Activated naive CD4-positive, alpha-beta T cell treated with anti-CD3 and anti-CD28 coated beads for 36 hours (primary cell): ENCODE measurements at regions of chr3 and their contacts with region 1.

Region 1: DNA sequence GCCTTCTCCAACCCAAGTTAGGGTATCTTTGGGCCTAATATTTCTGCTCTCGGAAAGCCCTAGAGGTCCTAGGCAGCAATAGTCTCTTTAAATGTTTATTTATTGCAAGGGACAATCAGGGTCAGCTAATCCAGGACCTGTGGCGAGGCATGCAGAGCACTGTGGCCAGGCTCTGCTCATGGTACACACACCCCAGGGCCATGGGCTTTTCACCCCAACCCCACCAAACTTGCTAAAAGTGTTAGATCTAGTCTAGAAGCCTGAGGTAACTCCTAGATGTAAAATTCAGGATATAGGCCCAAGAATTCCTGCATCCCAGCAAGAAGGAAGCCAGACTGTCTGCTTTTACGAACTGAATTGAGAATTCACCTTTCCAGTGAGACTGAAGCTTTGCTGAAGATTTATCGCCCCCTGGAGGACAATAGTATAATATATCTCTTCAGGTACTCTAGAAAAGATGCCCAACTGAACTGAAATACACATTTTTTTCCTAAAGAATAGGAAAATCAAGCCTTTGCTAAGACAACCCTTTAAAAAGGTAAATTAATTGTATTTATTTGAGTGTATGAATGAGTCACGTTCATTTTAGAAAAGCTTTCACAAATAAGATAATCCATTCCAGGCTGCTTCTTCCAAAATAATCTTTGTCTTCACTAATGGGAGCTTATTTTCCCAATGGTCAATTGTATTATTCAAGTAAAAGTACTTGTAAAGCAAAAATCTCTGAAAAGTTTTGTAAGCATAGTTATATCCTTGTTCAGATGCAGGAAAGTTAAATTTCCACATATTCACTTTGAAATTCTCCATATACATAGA is 89.8 kb downstream of the LRRC3B start:
- DNase-seq: no peak
- H3K4me3 Mint-ChIP-seq: no peak overlapping the region
- H3K27ac Mint-ChIP-seq: no peak overlapping the region
- H3K4me1 Mint-ChIP-seq: no peaks in the 10 kb centered on the region
- H3K27me3 Mint-ChIP-seq: peaks cover 2% of the 10 kb centered on the region

Region 2: DNA sequence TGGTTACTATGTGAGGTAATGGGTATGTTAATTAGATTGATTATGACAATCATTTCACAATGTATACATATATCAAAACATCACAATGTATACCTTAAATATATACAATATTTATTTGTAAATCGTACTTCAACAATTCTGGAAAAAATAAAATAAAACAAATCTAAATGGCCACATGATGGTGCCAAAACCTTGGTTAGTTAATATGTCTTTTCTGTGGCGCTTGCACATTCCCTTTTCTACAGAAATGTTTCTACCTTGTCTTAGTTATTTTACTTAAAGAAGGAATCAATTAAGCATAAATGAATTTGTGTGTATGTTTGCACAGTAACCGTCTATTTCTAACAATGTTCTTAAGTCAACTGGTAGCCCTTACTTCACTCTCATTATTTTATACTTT is 869.1 kb before region 1 on chr3:
- CTCF ChIA-PET with region 1: no interaction called
- intact Hi-C with region 1: loop called (anchors 5 kb)
- DNase-seq: no peak
- H3K4me3 Mint-ChIP-seq: no peak overlapping the region
- H3K27ac Mint-ChIP-seq: no peak overlapping the region
- H3K4me1 Mint-ChIP-seq: peaks cover 2% of the 10 kb centered on the region
- H3K27me3 Mint-ChIP-seq: no peaks in the 10 kb centered on the region

Region 3: DNA sequence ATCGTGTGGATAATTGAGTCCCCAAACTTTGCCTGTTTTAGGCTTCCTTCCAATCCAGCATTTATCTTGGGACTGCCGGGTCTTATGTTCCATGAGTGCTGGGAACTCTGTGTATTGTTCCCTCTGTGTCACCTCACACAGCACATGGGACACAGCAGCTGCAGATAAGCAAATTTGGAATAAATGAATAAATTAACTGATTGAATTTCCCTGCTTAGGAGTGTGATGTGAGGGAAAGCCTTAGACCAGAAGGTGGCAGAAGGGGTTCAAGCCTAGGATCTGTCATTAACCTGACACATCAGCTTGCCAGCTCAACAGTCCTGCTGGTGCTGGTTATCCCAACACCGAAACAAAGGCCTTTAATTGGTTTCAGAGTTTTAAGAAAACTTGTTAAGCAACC is 808.2 kb before region 1 on chr3:
- CTCF ChIA-PET with region 1: no interaction called
- intact Hi-C with region 1: loop called (anchors 10 kb)
- DNase-seq: no peak
- H3K4me3 Mint-ChIP-seq: no peak overlapping the region
- H3K27ac Mint-ChIP-seq: no peak overlapping the region
- H3K4me1 Mint-ChIP-seq: peaks cover 13% of the 10 kb centered on the region
- H3K27me3 Mint-ChIP-seq: no peaks in the 10 kb centered on the region

Region 4: GRCh38 chr3:26104851-26105251 is 607.6 kb before region 1 on chr3:
- CTCF ChIA-PET with region 1: no interaction called
- intact Hi-C with region 1: loop called (anchors 10 kb)
- DNase-seq: no peak
- H3K4me3 Mint-ChIP-seq: no peak overlapping the region
- H3K27ac Mint-ChIP-seq: no peak overlapping the region
- H3K4me1 Mint-ChIP-seq: no peaks in the 10 kb centered on the region
- H3K27me3 Mint-ChIP-seq: no peaks in the 10 kb centered on the region

Region 5: GRCh38 chr3:26498271-26498670 is 214.1 kb before region 1 on chr3:
- CTCF ChIA-PET with region 1: no interaction called
- intact Hi-C with region 1: no loop called
- DNase-seq: no peak
- H3K4me3 Mint-ChIP-seq: no peak overlapping the region
- H3K27ac Mint-ChIP-seq: no peak overlapping the region
- H3K4me1 Mint-ChIP-seq: no peaks in the 10 kb centered on the region
- H3K27me3 Mint-ChIP-seq: no peaks in the 10 kb centered on the region